ENCODE measurements at regions of chr2 and their contacts with region 1.

Region 1: DNA sequence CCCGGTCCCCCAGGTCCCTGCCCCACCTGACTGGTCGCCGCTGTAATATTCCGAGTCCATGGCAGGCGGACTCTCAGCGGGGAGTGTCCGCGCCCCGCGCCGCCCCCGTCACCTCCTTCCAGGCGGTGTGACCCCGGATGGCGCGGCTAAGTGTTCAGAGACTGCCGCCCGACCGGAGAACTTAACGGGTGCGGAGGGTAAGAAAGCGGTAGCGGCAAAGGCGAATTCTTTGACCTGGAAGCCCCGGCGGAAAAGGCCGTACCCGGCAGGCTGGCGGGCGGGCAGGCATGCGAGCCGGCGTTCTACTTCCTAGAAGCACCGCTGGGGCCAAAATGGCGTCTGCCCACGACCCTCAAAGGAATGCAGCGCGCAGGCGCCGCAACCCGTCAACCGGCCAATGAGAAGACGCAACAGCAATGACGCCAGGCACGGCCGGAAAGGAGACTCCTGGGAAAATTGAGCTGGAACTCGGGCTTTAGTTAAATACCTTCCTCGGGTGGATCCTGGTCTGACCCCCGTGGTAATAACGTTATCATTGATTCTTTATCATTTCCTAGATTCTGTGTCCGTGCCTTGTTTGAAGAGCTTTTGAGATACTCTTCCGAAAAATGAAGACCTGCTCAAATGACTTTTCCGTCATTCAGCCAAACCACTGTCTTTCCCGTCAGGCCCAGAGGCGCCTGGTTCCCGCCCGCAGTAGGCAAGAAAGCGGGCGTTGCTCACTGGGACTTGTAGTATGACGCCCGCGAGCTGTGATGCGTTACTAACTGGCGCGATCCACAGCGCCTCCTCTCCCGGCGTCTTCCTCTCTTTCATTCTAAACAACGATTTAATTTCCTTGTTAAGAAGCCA is at the start of gene IWS1:
- DNase-seq: peak; percentile 85
- ATAC-seq: peak; percentile 86
- H3K4me3 Mint-ChIP-seq: peak within 1 kb of the TSS; percentile 95
- H3K27ac Mint-ChIP-seq: peak within 1 kb of the TSS; percentile 98
- H3K4me1 Mint-ChIP-seq: peaks cover 32% of the 10 kb centered on the region
- H3K27me3 Mint-ChIP-seq: no peaks in the 10 kb centered on the region
- CTCF ChIP-seq: no peak
- total RNA-seq, gene IWS1: 45.6 and 49.3 TPM in 2 replicates

Region 2: GRCh38 chr2:127408004-127408806 is 118.2 kb before region 1 on chr2:
- CTCF ChIA-PET with region 1: no interaction called
- POLR2A ChIA-PET with region 1: no interaction called
- intact Hi-C with region 1: loop called (anchors 5 kb)
- DNase-seq: peak; percentile 79
- ATAC-seq: peak; percentile 91
- H3K4me3 Mint-ChIP-seq: peak overlapping the region; percentile 65
- H3K27ac Mint-ChIP-seq: no peak overlapping the region
- H3K4me1 Mint-ChIP-seq: peaks cover 51% of the 10 kb centered on the region
- H3K27me3 Mint-ChIP-seq: no peaks in the 10 kb centered on the region
- CTCF ChIP-seq: no peak

Region 3: DNA sequence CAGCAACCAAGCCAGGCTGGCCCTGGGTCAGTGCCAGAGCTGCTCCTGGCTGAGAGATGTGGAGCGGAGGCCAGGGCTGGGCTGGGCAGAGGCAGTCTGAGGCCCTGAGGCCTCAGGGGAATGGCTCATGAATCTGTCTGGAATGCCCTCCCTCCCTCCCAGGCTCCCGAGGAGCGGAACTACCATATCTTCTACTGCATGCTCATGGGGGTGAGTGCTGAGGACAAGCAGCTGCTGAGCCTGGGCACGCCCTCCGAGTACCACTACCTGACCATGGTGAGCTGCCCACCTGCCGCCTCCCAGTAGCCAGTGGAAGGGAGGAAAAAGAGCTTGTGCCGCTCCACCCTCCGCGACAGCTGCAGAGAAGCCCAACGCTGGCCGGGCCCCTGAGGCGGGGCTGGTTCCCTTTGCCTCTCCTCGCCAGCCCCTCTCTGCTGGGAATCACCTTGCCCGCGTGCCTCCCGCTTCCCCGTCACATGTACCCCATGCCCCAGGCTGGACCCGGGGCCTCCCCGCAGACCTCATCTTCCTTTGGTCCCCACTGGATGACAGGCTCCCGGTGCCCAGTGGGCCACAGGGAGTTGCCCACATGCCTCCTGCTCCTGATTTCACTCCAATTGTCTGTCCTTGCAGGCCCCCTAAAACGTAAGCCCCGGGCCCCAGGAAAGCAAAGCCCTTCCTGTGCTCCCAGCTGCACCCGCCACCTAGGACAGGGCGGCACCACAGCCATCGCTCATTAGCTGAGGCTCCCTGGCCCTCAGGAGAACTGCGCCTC is 50.2 kb after region 1 on chr2:
- CTCF ChIA-PET with region 1: no interaction called
- POLR2A ChIA-PET with region 1: interaction called, 4 read pairs
- intact Hi-C with region 1: loop called (anchors 1 kb)
- DNase-seq: no peak
- ATAC-seq: no peak
- H3K4me3 Mint-ChIP-seq: peak overlapping the region; percentile 50
- H3K27ac Mint-ChIP-seq: no peak overlapping the region
- H3K4me1 Mint-ChIP-seq: peaks cover 64% of the 10 kb centered on the region
- H3K27me3 Mint-ChIP-seq: no peaks in the 10 kb centered on the region
- CTCF ChIP-seq: no peak

Region 4: GRCh38 chr2:127626186-127626585 is 99.8 kb after region 1 on chr2:
- CTCF ChIA-PET with region 1: no interaction called
- POLR2A ChIA-PET with region 1: no interaction called
- intact Hi-C with region 1: no loop called
- DNase-seq: peak; percentile 7
- ATAC-seq: no peak
- H3K4me3 Mint-ChIP-seq: peak overlapping the region; percentile 15
- H3K27ac Mint-ChIP-seq: no peak overlapping the region
- H3K4me1 Mint-ChIP-seq: peaks cover 83% of the 10 kb centered on the region
- H3K27me3 Mint-ChIP-seq: no peaks in the 10 kb centered on the region
- CTCF ChIP-seq: no peak

Region 5: GRCh38 chr2:127810619-127811396 is 284.4 kb after region 1 on chr2 and contains the start of gene WDR33:
- CTCF ChIA-PET with region 1: no interaction called
- POLR2A ChIA-PET with region 1: interaction called, 3 read pairs
- intact Hi-C with region 1: loop called (anchors 10 kb)
- DNase-seq: peak; percentile 88
- ATAC-seq: peak; percentile 96
- H3K4me3 Mint-ChIP-seq: peak within 1 kb of the TSS; percentile 89
- H3K27ac Mint-ChIP-seq: peak within 1 kb of the TSS; percentile 99
- H3K4me1 Mint-ChIP-seq: peaks cover 56% of the 10 kb centered on the region
- H3K27me3 Mint-ChIP-seq: no peaks in the 10 kb centered on the region
- CTCF ChIP-seq: no peak
- total RNA-seq, gene WDR33: 83.0 and 93.0 TPM in 2 replicates

Region 6: GRCh38 chr2:128090945-128091725 is 564.8 kb after region 1 on chr2 and contains the start of gene UGGT1:
- CTCF ChIA-PET with region 1: no interaction called
- POLR2A ChIA-PET with region 1: interaction called, 11 read pairs
- intact Hi-C with region 1: loop called (anchors 1 kb)
- DNase-seq: peak; percentile 83
- ATAC-seq: peak; percentile 96
- H3K4me3 Mint-ChIP-seq: peak within 1 kb of the TSS; percentile 88
- H3K27ac Mint-ChIP-seq: peak within 1 kb of the TSS; percentile 93
- H3K4me1 Mint-ChIP-seq: peaks cover 41% of the 10 kb centered on the region
- H3K27me3 Mint-ChIP-seq: no peaks in the 10 kb centered on the region
- CTCF ChIP-seq: no peak
- total RNA-seq, gene UGGT1: 43.7 and 46.8 TPM in 2 replicates

Region 7: GRCh38 chr2:128594953-128595677 is 1068.7 kb after region 1 on chr2:
- CTCF ChIA-PET with region 1: no interaction called
- POLR2A ChIA-PET with region 1: no interaction called
- intact Hi-C with region 1: no loop called
- DNase-seq: no peak
- ATAC-seq: no peak
- H3K4me3 Mint-ChIP-seq: no peak overlapping the region
- H3K27ac Mint-ChIP-seq: no peak overlapping the region
- H3K4me1 Mint-ChIP-seq: no peaks in the 10 kb centered on the region
- H3K27me3 Mint-ChIP-seq: peaks cover 2% of the 10 kb centered on the region
- CTCF ChIP-seq: no peak

Measured in activated B cell treated with CpG ODN at 0.5 μM for 24 hours (primary cell).